CD4-positive, alpha-beta T cell (primary cell): ENCODE measurements at regions of chr3 and their contacts with region 1.

Region 1: GRCh38 chr3:38101811-38102443 is 35.0 kb downstream of the ACAA1 start:
- DNase-seq: peak in 2 of 14 experiments; percentile 17 to 19
- ATAC-seq: no peak
- H3K4me3 ChIP-seq: no peak overlapping the region
- H3K4me3 Mint-ChIP-seq: no peak overlapping the region
- H3K27ac ChIP-seq: no peak overlapping the region
- H3K27ac Mint-ChIP-seq: no peak overlapping the region
- H3K4me1 ChIP-seq: no peaks in the 10 kb centered on the region
- H3K4me1 Mint-ChIP-seq: no peaks in the 10 kb centered on the region
- H3K27me3 ChIP-seq: no peaks in the 10 kb centered on the region
- H3K27me3 Mint-ChIP-seq: no peaks in the 10 kb centered on the region
- CTCF ChIP-seq: no peak

Region 2: DNA sequence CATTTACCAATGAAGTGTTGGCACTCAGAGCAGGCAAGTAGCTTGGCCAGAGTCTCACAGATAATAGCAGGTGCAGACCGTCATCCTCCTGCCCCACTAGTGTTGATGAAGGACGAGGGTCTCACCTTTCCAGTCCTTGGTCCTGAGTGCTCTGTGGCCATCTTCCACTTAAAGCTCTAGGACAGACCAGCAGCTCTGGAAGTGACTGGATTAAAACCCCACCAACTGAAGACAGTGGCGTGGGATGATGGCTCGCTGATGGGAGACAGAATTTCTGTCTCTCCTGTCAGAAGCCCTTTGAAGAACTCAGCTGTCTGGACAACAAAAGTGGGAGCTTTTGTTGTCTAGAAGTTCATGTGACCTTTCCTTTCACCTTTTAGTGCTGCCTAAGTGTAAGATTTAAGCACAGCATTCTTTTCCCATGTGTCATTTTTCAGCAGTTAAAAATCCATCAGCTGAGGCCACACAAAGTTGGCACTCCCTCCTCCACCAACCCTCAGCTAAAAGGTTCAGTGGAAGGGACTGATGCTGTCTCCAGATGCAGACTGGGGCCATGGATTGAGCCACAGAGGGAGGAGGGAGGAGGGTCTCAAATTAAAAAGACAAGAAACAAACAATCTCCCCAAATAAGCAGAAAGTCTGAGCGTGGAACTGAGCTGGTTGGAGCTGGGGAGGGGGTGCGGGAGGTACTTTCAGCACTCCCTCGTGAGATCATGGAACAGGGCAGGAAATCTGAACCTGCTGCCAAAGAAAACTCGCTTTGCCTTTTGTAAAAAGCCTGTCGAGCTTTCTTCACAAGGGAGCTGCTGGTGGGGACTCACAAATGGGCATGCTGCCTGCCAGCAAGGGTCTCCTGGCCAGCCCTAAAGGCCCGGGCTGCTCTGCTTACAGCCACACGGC is 388.8 kb before region 1 on chr3:
- CTCF ChIA-PET with region 1: no interaction called
- POLR2A ChIA-PET with region 1: no interaction called
- intact Hi-C with region 1: no loop called
- DNase-seq: no peak
- ATAC-seq: no peak
- H3K4me3 ChIP-seq: no peak overlapping the region
- H3K4me3 Mint-ChIP-seq: no peak overlapping the region
- H3K27ac ChIP-seq: no peak overlapping the region
- H3K27ac Mint-ChIP-seq: no peak overlapping the region
- H3K4me1 ChIP-seq: no peaks in the 10 kb centered on the region
- H3K4me1 Mint-ChIP-seq: no peaks in the 10 kb centered on the region
- H3K27me3 ChIP-seq: peaks cover 3% of the 10 kb centered on the region in 2 experiments
- H3K27me3 Mint-ChIP-seq: peaks cover 11% of the 10 kb centered on the region
- CTCF ChIP-seq: no peak

Region 3: DNA sequence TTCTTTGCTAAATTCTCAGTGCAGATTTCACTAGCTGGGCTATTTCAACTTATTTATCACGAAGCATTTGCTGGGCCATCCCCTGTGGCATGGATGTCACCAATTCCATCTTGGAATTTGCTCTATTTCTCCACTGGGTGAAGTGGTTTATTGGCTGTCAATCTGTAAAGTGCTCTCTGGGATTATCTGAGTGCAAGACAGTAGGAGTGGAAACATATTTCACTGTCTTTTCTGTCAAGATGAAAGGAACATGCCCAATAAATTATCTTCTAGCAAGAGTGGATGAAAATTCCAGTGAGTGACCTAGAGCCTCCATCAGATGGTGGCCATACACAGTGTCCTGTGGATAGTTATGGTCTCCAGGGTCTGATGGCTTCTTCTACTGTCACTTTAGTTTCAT is 265.3 kb before region 1 on chr3:
- CTCF ChIA-PET with region 1: no interaction called
- POLR2A ChIA-PET with region 1: no interaction called
- intact Hi-C with region 1: loop called in 1 of 2 experiments (anchors 5 kb)
- DNase-seq: no peak
- ATAC-seq: no peak
- H3K4me3 ChIP-seq: no peak overlapping the region
- H3K4me3 Mint-ChIP-seq: no peak overlapping the region
- H3K27ac ChIP-seq: no peak overlapping the region
- H3K27ac Mint-ChIP-seq: no peak overlapping the region
- H3K4me1 ChIP-seq: no peaks in the 10 kb centered on the region
- H3K4me1 Mint-ChIP-seq: no peaks in the 10 kb centered on the region
- H3K27me3 ChIP-seq: peaks cover 0 to 2% of the 10 kb centered on the region in 2 experiments
- H3K27me3 Mint-ChIP-seq: no peaks in the 10 kb centered on the region
- CTCF ChIP-seq: no peak